Cardiac septum (tissue), 1 donor: ENCODE measurements at regions of chr3 and their contacts with region 1.

Region 1: GRCh38 chr3:111737706-111738086 is 121.4 kb upstream of the PHLDB2 start:
- DNase-seq: no peak

Region 2: GRCh38 chr3:111787556-111788463 is 50.1 kb after region 1 on chr3:
- intact Hi-C with region 1: loop called (anchors 5 kb)
- DNase-seq: no peak

Region 3: GRCh38 chr3:111803123-111803593 is 65.5 kb after region 1 on chr3:
- intact Hi-C with region 1: loop called (anchors 5 kb)
- DNase-seq: no peak

Region 4: GRCh38 chr3:111813441-111813840 is 75.7 kb after region 1 on chr3:
- intact Hi-C with region 1: no loop called
- DNase-seq: no peak

Region 5: GRCh38 chr3:111824351-111824750 is 86.7 kb after region 1 on chr3:
- intact Hi-C with region 1: loop called (anchors 5 kb)
- DNase-seq: no peak

Region 6: DNA sequence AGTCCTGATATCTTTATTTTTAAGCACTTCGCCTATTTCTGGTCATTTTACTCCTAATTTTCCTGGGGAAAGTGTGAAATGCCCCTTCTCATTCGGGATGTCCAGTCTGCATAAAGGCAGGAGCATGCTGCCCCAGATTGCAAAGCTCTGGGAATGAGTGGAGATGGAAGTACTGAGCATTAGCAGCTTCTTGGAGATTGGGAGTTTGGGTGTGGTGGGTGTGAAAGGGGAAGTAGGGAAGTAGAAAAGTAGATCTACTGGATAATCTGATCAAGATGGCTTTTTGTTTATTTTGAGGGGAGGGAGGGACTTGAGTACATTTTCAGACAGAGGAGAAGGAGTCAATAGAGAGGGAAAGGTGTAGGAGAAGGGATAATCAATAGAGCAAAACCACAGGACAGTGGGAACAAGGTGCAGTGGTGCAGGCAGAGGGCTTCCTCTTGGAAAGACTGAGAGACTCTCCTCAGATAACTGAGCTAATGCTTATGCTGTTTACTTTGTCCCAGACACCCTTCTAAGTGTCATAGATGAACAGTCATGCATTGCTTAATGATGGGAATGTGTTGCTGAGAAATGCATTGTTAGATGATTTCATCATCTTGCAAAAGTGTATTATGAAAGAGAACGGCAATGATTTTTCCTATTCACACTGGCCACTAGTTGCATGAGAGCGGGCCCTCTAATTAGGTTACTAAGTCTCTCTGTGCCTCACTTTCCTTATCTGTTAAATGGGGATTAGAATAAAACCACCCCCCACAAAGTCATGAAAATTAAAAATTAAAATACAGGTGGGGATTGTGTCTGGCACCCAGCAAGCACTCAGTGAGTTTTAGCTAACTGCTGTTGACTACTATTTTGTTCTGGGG is 166.9 kb after region 1 on chr3:
- intact Hi-C with region 1: loop called (anchors 5 kb)
- DNase-seq: no peak